ENCODE measurements at regions of chr12 and their contacts with region 1.

Region 1: GRCh38 chr12:114408886-114409851 is 3.2 kb upstream of the TBX5 start:
- DNase-seq: no peak
- ATAC-seq: no peak
- H3K4me3 Mint-ChIP-seq: no peak overlapping the region
- H3K27ac Mint-ChIP-seq: no peak overlapping the region
- H3K4me1 Mint-ChIP-seq: peaks cover 11% of the 10 kb centered on the region
- H3K27me3 Mint-ChIP-seq: peaks cover 79% of the 10 kb centered on the region

Region 2: DNA sequence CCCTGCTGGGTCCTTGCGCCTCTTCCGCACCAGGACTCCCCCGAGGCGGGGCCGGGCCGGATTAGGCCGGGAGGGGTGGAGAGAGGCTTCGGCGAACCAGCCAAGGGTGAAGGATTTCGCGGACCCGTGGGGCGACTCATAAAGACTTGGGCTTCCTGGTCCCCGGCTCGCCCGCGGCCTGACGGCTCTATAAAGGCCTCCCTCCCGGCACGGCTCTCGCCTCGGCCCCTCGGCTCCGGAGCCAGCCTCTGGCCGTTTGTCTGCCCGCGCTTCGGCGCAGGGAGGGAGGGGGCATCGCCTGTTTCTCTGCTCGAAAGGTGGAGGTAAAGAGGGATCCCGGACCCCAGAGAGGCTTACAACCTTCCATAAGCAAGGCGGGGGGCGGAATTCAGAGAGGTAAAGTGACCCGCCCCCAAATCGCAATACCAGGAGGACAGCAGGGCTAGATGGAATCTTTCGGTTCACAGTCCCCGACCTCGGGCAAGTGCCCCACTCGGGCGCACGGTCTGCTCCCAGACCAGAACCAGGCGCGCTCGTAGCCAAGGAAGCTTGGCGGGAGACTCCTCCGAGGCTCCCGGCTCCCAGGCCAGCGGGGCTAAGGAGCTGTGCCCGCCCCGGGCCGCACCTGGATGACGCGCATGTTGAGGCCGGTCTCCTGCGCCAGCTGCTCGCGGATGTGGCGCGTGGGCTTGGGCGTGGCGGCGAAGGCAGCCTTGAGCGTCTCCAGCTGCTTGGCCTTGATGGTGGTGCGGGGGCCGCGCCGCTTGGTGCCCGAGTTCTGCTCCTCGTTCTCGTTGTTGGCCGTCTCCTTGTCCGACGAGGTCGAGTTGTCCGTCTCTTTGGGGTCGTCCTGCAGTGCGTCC is 941.4 kb before region 1 on chr12:
- CTCF ChIA-PET with region 1: no interaction called
- POLR2A ChIA-PET with region 1: no interaction called
- intact Hi-C with region 1: loop called (anchors 2 to 5 kb)
- DNase-seq: no peak
- ATAC-seq: no peak
- H3K4me3 Mint-ChIP-seq: no peak overlapping the region
- H3K27ac Mint-ChIP-seq: no peak overlapping the region
- H3K4me1 Mint-ChIP-seq: peaks cover 18% of the 10 kb centered on the region
- H3K27me3 Mint-ChIP-seq: peaks cover 64% of the 10 kb centered on the region

Region 3: DNA sequence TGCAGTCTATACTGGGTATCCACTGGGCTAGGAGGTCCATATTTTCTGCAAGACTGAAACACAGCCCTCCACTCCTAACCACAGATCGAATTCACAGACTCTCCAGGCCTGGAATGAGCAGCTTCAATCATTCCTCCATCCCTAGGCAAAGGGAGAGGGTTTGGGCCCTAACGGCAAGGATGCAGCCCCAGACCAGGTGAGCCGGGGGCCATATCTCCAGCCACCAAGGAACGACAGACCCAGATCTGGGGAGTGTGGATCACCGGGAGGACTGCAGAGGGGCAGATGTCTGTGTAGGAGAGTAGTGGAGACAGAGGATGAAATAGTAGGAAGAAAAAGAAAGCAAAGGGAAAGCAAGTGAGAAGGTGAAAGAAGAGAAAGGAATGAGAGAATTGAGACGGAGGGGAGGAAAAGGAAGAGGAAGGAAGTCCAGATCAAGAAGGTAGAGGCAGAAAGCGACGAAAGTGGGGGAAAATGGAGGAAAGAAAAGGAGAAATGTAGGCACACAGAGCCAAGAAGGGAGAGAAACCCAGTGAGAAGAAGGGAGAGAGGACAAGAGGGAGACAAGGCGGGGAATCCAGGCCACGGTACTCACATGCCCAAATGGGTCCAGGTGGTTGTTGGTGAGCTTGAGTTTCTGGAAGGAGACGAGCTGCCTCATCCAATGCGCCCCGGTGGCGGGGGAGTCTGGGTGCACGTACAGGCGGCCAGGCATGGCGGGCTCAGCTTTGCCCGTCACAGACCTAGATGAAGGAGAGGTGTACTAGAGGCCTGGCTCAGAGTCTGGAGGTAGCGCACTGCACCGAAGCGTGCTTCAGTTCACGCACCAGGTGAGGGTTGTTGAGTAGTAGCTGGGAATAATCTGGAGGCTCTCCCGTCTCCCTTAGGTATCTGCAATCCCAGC is 10.9 kb before region 1 on chr12:
- CTCF ChIA-PET with region 1: no interaction called
- POLR2A ChIA-PET with region 1: no interaction called
- intact Hi-C with region 1: no loop called
- DNase-seq: no peak
- ATAC-seq: no peak
- H3K4me3 Mint-ChIP-seq: no peak overlapping the region
- H3K27ac Mint-ChIP-seq: no peak overlapping the region
- H3K4me1 Mint-ChIP-seq: no peaks in the 10 kb centered on the region
- H3K27me3 Mint-ChIP-seq: peaks cover 77% of the 10 kb centered on the region

Region 4: DNA sequence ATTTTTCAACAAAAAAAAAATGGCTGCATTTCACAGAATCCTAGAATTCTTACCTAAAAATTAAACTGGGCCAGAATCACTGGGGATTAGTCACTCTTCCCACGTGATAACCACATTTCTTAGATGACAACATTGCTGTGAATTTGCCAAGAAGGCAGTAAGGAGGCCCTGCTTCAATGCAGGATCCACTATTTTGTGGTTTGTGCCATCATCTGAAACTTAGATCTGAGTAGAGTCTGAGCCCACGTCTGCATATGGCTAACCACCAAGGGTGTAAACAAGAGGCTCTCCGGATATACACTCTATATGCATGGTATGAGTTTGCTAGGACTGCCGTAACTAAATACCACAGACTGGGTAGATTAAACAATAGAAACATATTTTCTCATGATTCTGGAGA is 21.1 kb after region 1 on chr12:
- CTCF ChIA-PET with region 1: no interaction called
- POLR2A ChIA-PET with region 1: interaction called, 3 read pairs
- intact Hi-C with region 1: loop called in 1 of 2 experiments (anchors 1 kb)
- DNase-seq: no peak
- ATAC-seq: peak; percentile 65
- H3K4me3 Mint-ChIP-seq: no peak overlapping the region
- H3K27ac Mint-ChIP-seq: no peak overlapping the region
- H3K4me1 Mint-ChIP-seq: no peaks in the 10 kb centered on the region
- H3K27me3 Mint-ChIP-seq: peaks cover 18% of the 10 kb centered on the region

Region 5: DNA sequence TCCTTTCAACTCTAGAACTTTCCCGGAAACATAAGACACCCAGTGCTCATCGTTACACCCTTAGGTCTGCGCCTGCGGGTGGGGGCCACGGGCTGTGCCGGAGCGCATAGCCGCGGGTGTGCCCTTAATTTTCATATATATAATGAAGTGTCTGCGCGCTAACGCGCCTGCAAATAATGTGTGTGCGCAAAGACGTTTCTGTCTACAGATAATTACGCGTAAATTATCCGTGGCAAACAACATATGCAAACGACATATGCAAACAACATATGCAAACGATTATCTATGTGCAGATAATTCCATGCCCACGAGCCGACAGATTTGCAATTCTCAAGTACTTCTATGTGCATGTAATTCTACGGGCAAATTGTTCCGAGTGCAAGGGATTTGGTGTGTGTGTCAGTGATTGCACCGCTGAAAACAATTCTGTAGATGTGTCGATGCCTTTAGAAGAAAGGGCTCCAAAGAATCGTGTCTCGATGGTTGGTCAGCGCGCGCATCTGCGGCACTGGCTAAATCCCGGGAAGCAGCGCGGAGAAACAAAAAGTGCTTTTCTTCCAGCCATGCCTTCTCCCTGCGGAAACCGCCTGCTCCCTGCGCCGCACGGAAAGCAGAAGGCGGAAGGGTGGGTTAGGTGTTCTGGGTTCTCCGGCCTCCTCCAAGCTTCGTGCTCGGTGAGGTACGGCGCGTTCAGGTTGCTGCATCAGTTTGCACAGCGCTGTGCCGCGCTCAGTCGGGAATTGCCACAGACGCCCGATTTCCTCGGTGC is 31.3 kb after region 1 on chr12:
- CTCF ChIA-PET with region 1: no interaction called
- POLR2A ChIA-PET with region 1: no interaction called
- intact Hi-C with region 1: loop called (anchors 2 kb)
- DNase-seq: no peak
- ATAC-seq: no peak
- H3K4me3 Mint-ChIP-seq: no peak overlapping the region
- H3K27ac Mint-ChIP-seq: no peak overlapping the region
- H3K4me1 Mint-ChIP-seq: no peaks in the 10 kb centered on the region
- H3K27me3 Mint-ChIP-seq: peaks cover 73% of the 10 kb centered on the region

Region 6: GRCh38 chr12:114697741-114698565 is 288.8 kb after region 1 on chr12:
- CTCF ChIA-PET with region 1: no interaction called
- POLR2A ChIA-PET with region 1: no interaction called
- intact Hi-C with region 1: loop called (anchors 5 to 10 kb)
- DNase-seq: no peak
- ATAC-seq: no peak
- H3K4me3 Mint-ChIP-seq: no peak overlapping the region
- H3K27ac Mint-ChIP-seq: no peak overlapping the region
- H3K4me1 Mint-ChIP-seq: no peaks in the 10 kb centered on the region
- H3K27me3 Mint-ChIP-seq: peaks cover 88% of the 10 kb centered on the region